CD4-positive, alpha-beta T cell (primary cell): ENCODE measurements at regions of chr6 and their contacts with region 1.

Region 1: DNA sequence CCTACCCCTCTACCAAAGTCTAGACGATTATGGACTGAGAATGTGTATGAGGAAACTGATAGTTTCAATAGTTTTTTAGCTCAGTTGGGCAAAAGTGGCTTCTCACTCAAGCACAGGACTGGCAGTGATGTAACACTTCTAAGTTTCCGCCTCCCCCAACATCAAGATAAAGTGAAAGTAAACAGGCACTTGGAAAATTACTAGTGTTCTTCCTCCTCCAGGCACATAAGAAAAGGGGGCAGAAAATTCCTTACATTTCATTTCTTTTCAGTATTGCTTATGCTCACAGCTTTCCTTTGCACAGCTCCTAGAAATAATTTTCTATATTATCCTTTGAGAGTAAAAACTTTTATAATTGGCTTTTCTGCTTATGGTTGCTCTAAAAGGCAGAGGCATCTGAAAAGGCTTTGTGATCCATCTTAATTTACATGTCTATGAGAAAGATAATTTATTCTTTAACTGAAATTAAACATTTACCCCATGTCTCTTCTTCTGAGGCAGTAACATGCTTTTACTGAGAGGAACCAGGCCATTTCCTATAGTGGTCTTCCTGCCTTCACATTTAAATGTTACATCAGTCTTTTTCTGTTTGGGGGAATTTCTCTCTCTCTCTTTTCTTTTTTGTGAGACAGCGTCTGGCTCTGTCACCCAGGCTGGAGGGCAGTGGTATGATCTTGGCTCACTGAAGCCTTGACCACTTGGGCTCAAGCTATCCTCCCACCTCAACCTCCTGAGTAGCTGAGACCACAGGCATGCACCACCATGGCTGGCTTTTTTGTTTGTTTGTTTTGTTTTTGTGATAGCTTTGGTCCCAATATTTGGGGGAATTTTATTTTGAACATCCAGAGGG is 65.0 kb upstream of the EEF1A1 start:
- DNase-seq: peak in 8 of 14 experiments; percentile 6 to 87 (median 36)
- ATAC-seq: peak; percentile 86
- H3K4me3 ChIP-seq: peak overlapping the region; percentile 48
- H3K4me3 Mint-ChIP-seq: peak overlapping the region; percentile 75
- H3K27ac ChIP-seq: peak overlapping the region; percentile 89 to 93
- H3K27ac Mint-ChIP-seq: peak overlapping the region; percentile 98
- H3K4me1 ChIP-seq: peaks cover 15% of the 10 kb centered on the region
- H3K4me1 Mint-ChIP-seq: peaks cover 20% of the 10 kb centered on the region
- H3K27me3 ChIP-seq: no peaks in the 10 kb centered on the region
- H3K27me3 Mint-ChIP-seq: no peaks in the 10 kb centered on the region
- CTCF ChIP-seq: no peak

Region 2: DNA sequence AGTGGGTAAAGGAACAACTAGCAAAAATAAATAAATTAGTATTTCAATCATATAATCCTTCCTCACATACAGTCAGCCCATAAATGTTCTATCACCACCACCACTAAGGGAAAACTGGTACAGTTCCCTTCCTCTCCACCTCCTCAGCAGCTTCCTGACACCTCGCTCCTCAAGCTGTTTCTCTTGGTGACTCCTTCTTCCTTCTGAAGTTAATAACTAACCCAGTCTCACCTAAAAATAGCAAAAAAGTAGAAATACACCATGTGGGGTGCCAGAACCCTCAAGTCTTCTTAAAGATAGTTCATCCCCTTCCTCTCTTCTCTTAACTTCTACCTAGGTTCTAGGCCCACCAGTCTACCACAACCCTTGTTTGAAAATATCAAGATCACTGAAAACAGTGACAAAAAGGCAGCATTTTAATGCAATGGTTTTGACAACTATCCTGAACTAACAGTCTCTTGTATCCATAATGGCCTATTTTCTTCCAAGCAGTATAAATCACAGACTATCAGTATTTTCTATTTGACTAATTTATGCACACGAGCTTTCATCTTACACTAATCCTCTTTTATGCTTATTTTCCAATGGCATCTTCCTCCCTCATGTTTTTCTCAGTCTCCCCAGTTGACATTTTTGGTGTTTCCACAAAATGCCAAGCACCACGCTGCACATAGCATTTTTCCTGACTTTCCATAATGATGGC is 446.0 kb before region 1 on chr6:
- CTCF ChIA-PET with region 1: no interaction called
- POLR2A ChIA-PET with region 1: no interaction called
- intact Hi-C with region 1: no loop called
- DNase-seq: no peak
- ATAC-seq: no peak
- H3K4me3 ChIP-seq: no peak overlapping the region
- H3K4me3 Mint-ChIP-seq: no peak overlapping the region
- H3K27ac ChIP-seq: no peak overlapping the region
- H3K27ac Mint-ChIP-seq: no peak overlapping the region
- H3K4me1 ChIP-seq: no peaks in the 10 kb centered on the region
- H3K4me1 Mint-ChIP-seq: no peaks in the 10 kb centered on the region
- H3K27me3 ChIP-seq: no peaks in the 10 kb centered on the region
- H3K27me3 Mint-ChIP-seq: no peaks in the 10 kb centered on the region
- CTCF ChIP-seq: no peak

Region 3: GRCh38 chr6:73528897-73529296 is 56.9 kb before region 1 on chr6:
- CTCF ChIA-PET with region 1: interaction called, 7 read pairs
- POLR2A ChIA-PET with region 1: interaction called, 137 read pairs
- intact Hi-C with region 1: loop called in 1 of 2 experiments (anchors 5 kb)
- DNase-seq: no peak
- ATAC-seq: no peak
- H3K4me3 ChIP-seq: no peak overlapping the region
- H3K4me3 Mint-ChIP-seq: no peak overlapping the region
- H3K27ac ChIP-seq: no peak overlapping the region
- H3K27ac Mint-ChIP-seq: no peak overlapping the region
- H3K4me1 ChIP-seq: peaks cover 7% of the 10 kb centered on the region
- H3K4me1 Mint-ChIP-seq: peaks cover 6% of the 10 kb centered on the region
- H3K27me3 ChIP-seq: no peaks in the 10 kb centered on the region
- H3K27me3 Mint-ChIP-seq: no peaks in the 10 kb centered on the region
- CTCF ChIP-seq: no peak